ENCODE measurements at regions of chr10 and their contacts with region 1.

Region 1: DNA sequence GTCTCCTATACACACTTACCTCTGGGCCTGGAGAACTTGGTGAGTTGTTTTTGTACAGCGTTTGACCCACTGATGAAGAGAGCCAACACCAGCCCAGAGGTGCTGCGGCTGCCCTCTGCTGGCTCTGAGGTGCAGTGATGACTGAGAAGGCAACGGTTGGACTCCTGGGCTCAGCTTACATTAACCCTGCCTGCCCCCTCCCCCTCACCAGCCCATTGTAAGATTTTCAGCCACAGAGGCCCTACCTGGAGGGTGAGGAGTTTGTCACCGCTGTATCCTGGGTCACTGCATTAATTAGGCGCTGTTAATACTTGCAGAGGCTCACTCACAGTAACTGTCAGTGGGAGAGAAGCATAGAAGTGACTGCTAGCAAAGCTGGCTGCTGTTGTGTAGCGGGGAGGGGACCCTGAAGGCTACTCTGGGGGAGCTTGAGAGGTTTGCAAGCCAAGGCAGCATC is 19.0 kb upstream of the ANKRD2 start:
- DNase-seq: peak; percentile 72
- H3K4me3 ChIP-seq: no peak overlapping the region
- H3K27ac ChIP-seq: no peak overlapping the region
- H3K4me1 ChIP-seq: peaks cover 42% of the 10 kb centered on the region
- H3K27me3 ChIP-seq: no peaks in the 10 kb centered on the region
- CTCF ChIP-seq: peak; percentile 93

Region 2: GRCh38 chr10:97466755-97467154 is 86.8 kb before region 1 on chr10:
- intact Hi-C with region 1: loop called (anchors 5 kb)
- DNase-seq: no peak
- H3K4me3 ChIP-seq: no peak overlapping the region
- H3K27ac ChIP-seq: peak overlapping the region; percentile 27
- H3K4me1 ChIP-seq: peaks cover 38% of the 10 kb centered on the region
- H3K27me3 ChIP-seq: no peaks in the 10 kb centered on the region
- CTCF ChIP-seq: no peak